ENCODE measurements at regions of chr5 and their contacts with region 1.

Region 1: GRCh38 chr5:166961039-166961438 is 1330.4 kb upstream of the WWC1 start:
- DNase-seq: peak; percentile 42
- H3K4me3 Mint-ChIP-seq: no peak overlapping the region
- H3K27ac Mint-ChIP-seq: no peak overlapping the region
- H3K4me1 Mint-ChIP-seq: no peaks in the 10 kb centered on the region
- H3K27me3 Mint-ChIP-seq: no peaks in the 10 kb centered on the region
- CTCF ChIP-seq: peak; percentile 39

Region 2: DNA sequence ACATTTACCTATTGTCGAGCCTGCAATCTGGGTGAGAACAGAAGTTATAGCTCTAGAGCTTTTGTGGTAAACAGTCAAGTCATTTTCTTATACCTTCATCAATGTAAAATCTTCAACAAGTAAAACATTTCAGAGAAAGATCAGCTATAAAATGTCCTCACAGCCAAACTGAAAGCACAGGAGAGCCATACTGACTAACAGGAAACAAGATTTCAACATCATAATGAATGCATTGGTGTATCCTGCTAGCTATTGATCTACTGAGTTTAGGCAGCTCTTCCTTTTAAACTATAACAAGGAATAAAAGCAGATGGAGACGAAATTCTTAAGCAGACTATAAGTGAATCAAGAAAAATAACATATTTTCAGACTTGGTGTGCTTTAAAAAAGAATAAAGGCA is 192.5 kb before region 1 on chr5:
- CTCF ChIA-PET with region 1: no interaction called
- POLR2A ChIA-PET with region 1: no interaction called
- intact Hi-C with region 1: no loop called
- DNase-seq: peak; percentile 53
- H3K4me3 Mint-ChIP-seq: no peak overlapping the region
- H3K27ac Mint-ChIP-seq: peak overlapping the region; percentile 55
- H3K4me1 Mint-ChIP-seq: peaks cover 26% of the 10 kb centered on the region
- H3K27me3 Mint-ChIP-seq: no peaks in the 10 kb centered on the region
- CTCF ChIP-seq: no peak

Region 3: GRCh38 chr5:166883016-166883415 is 78.0 kb before region 1 on chr5:
- CTCF ChIA-PET with region 1: no interaction called
- POLR2A ChIA-PET with region 1: no interaction called
- intact Hi-C with region 1: no loop called
- DNase-seq: peak; percentile 90
- H3K4me3 Mint-ChIP-seq: peak overlapping the region; percentile 48
- H3K27ac Mint-ChIP-seq: peak overlapping the region; percentile 20
- H3K4me1 Mint-ChIP-seq: peaks cover 11% of the 10 kb centered on the region
- H3K27me3 Mint-ChIP-seq: no peaks in the 10 kb centered on the region
- CTCF ChIP-seq: no peak

Region 4: DNA sequence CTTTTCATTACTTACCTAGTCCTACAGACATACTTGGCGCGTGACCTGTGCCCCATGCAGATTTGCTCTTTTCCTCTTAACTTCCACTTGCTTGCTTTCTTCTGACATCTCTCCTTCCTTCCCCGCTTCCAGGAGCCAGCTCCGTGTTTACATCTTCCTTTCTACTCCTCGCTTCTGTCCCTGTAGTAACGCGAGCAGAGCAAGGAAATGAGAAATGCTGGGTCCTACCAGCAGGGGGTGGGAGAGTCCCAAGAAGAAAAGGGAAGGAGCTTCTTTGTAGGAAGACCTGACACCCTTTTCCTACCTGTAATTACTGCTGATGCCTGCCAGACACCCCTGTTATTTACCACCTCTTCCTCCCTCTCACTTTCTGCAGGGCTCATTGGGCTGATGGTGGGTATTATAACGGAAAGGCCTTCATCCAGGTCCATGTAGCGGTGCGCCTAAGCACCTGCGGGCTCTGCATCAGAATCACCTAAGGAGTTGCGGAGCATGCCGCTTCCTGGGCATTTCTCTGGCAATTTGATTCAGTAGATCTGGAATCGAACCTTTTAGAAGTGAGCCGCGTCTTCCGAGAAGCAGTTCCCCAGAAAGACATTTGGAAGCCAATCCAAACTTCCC is 69.6 kb after region 1 on chr5:
- CTCF ChIA-PET with region 1: no interaction called
- POLR2A ChIA-PET with region 1: no interaction called
- intact Hi-C with region 1: no loop called
- DNase-seq: peak; percentile 55
- H3K4me3 Mint-ChIP-seq: no peak overlapping the region
- H3K27ac Mint-ChIP-seq: no peak overlapping the region
- H3K4me1 Mint-ChIP-seq: peaks cover 13% of the 10 kb centered on the region
- H3K27me3 Mint-ChIP-seq: no peaks in the 10 kb centered on the region
- CTCF ChIP-seq: peak; percentile 43

Region 5: DNA sequence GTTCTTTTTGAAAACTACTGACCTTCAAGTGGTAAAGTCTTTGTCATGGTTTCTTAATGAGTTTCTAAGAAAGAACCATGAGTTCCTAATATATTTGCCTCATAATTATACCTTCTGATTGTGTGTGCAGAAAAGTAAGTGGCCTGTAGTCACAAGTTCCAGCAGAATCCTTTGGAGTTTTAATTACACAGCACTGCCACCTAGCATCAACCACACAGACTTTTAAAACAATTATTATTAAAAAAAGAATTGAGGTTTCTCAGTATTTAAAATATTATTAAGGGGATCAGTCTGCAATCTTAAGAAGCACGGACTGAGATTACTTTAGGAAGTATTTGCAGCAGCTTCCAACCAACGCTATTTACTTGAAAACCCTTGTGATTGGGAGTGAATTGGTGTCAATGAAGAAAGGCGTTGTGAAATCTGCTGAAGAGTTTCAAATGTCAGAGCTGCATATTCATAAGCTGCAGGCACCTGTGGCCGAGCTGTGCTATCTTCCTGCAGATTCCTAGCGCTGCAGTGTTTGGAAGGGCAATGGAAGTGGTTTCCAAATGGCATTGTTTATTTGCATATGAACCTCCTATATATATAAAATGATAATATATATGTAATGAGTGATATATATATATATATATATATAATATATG is 256.2 kb after region 1 on chr5:
- CTCF ChIA-PET with region 1: interaction called, 5 read pairs
- POLR2A ChIA-PET with region 1: no interaction called
- intact Hi-C with region 1: loop called (anchors 10 kb)
- DNase-seq: peak; percentile 27
- H3K4me3 Mint-ChIP-seq: no peak overlapping the region
- H3K27ac Mint-ChIP-seq: no peak overlapping the region
- H3K4me1 Mint-ChIP-seq: no peaks in the 10 kb centered on the region
- H3K27me3 Mint-ChIP-seq: no peaks in the 10 kb centered on the region
- CTCF ChIP-seq: peak; percentile 44

Region 6: DNA sequence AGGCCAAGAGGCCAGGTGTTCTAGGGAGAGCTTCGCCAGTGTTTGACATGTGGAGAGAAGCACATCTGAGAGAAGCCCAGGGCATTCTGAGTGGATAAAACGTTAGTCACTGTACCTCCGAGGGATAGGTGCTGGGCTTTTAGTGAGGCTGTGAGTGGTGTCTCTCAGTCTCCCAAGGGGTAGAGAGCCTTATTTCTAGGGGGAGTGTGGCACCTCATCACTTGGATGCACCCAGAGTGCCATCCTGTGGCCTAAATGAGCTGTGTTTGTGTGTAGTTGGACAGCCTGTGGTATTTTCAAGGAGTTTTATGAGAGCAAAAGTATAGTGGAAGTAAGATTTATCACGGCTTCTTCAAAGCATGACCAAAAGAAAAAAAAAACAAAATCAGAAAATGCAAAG is 283.5 kb after region 1 on chr5:
- CTCF ChIA-PET with region 1: interaction called, 3 read pairs
- POLR2A ChIA-PET with region 1: no interaction called
- intact Hi-C with region 1: loop called (anchors 1 kb)
- DNase-seq: peak; percentile 58
- H3K4me3 Mint-ChIP-seq: no peak overlapping the region
- H3K27ac Mint-ChIP-seq: no peak overlapping the region
- H3K4me1 Mint-ChIP-seq: peaks cover 19% of the 10 kb centered on the region
- H3K27me3 Mint-ChIP-seq: no peaks in the 10 kb centered on the region
- CTCF ChIP-seq: peak; percentile 67

Region 7: DNA sequence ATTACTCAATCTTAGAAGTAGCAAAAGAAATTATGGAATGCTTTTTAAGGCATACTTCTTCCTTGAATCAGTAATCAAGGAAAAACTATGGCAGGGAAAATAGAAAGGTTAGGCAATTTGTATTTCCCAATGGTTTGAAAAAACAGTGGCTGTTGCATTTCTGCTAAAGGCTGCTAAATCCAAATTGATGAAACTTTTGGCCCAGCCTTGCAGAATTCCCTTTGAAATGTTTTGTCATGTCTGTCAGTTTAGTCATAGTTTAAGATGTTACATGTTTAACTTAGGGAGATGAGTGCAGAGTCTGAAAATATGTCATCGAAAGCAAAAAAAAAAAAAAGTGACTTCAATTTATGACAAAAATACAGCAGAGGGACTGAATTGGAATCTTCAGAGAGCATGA is 451.5 kb after region 1 on chr5:
- CTCF ChIA-PET with region 1: no interaction called
- POLR2A ChIA-PET with region 1: no interaction called
- intact Hi-C with region 1: no loop called
- DNase-seq: peak; percentile 50
- H3K4me3 Mint-ChIP-seq: no peak overlapping the region
- H3K27ac Mint-ChIP-seq: no peak overlapping the region
- H3K4me1 Mint-ChIP-seq: peaks cover 16% of the 10 kb centered on the region
- H3K27me3 Mint-ChIP-seq: no peaks in the 10 kb centered on the region
- CTCF ChIP-seq: no peak